Mammary epithelial cell (primary cell): ENCODE measurements at regions of chr13 and their contacts with region 1.

Region 1: GRCh38 chr13:79995334-79995733 is 345.6 kb downstream of the SPRY2 start:
- DNase-seq: peak; percentile 93
- H3K4me3 ChIP-seq: no peak overlapping the region
- H3K27ac ChIP-seq: no peak overlapping the region
- H3K4me1 ChIP-seq: peaks cover 14% of the 10 kb centered on the region
- H3K27me3 ChIP-seq: no peaks in the 10 kb centered on the region
- CTCF ChIP-seq: no peak

Region 2: GRCh38 chr13:79581870-79582315 is 413.4 kb before region 1 on chr13:
- CTCF ChIA-PET with region 1: no interaction called
- dilution Hi-C with region 1: loop called (anchors 25 kb)
- in situ Hi-C with region 1: no loop called
- intact Hi-C with region 1: no loop called
- DNase-seq: peak; percentile 51
- H3K4me3 ChIP-seq: no peak overlapping the region
- H3K27ac ChIP-seq: no peak overlapping the region
- H3K4me1 ChIP-seq: no peaks in the 10 kb centered on the region
- H3K27me3 ChIP-seq: no peaks in the 10 kb centered on the region
- CTCF ChIP-seq: no peak

Region 3: GRCh38 chr13:80048802-80049201 is 53.5 kb after region 1 on chr13:
- CTCF ChIA-PET with region 1: no interaction called
- dilution Hi-C with region 1: no loop called
- in situ Hi-C with region 1: no loop called
- intact Hi-C with region 1: no loop called
- DNase-seq: peak; percentile 95
- H3K4me3 ChIP-seq: no peak overlapping the region
- H3K27ac ChIP-seq: peak overlapping the region; percentile 5
- H3K4me1 ChIP-seq: peaks cover 27% of the 10 kb centered on the region
- H3K27me3 ChIP-seq: no peaks in the 10 kb centered on the region
- CTCF ChIP-seq: no peak